Common myeloid progenitor, CD34-positive (primary cell): ENCODE measurements at regions of chr6 and their contacts with region 1.

Region 1: GRCh38 chr6:2791124-2791974 is 26.2 kb downstream of the WRNIP1 start:
- DNase-seq: peak; percentile 87 to 89 (median 89)
- H3K4me3 ChIP-seq: peak overlapping the region in 1 of 7 experiments; percentile 25
- H3K27ac ChIP-seq: peak overlapping the region in 1 of 2 experiments; percentile 66
- H3K4me1 ChIP-seq: peaks cover 18 to 63% (median 56%) of the 10 kb centered on the region in 4 experiments
- H3K27me3 ChIP-seq: no peaks in the 10 kb centered on the region

Region 2: DNA sequence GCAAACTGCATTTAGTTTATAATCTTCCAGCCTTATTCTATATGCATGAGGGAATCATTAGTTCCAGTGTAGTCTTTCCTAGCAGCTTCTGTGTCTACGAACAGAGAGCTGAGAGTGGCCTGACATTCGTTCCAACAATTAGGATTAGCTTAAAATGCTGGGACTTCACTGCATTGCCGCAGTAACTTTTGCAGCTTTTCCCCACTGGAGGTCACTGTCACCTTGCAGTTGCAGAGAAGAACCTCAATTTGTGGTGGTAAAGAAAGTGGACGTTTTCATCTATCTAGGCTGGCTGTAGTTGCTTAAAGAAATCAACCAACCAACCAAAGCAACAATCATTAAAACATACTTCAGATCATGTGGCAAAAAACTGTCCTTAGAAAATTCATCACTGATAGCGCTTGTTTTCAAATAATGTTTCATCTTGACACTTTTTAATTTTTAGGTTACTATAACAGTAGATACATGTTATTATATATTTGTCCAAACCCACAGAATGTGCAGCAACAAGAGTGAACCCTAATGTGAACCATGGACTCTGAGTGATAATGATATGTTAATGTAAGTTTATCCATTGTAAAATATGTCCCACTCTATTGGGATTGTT is 52.9 kb before region 1 on chr6:
- CTCF ChIA-PET with region 1: interaction called, 17 read pairs
- POLR2A ChIA-PET with region 1: no interaction called
- DNase-seq: peak; percentile 84 to 91 (median 88)
- H3K4me3 ChIP-seq: no peak overlapping the region
- H3K27ac ChIP-seq: no peak overlapping the region
- H3K4me1 ChIP-seq: peaks cover 9 to 38% (median 25%) of the 10 kb centered on the region in 4 experiments
- H3K27me3 ChIP-seq: no peaks in the 10 kb centered on the region

Region 3: GRCh38 chr6:2810092-2810671 is 18.8 kb after region 1 on chr6:
- CTCF ChIA-PET with region 1: interaction called, 13 read pairs
- POLR2A ChIA-PET with region 1: no interaction called
- DNase-seq: peak in 2 of 3 donors; percentile 36 to 49
- H3K4me3 ChIP-seq: no peak overlapping the region
- H3K27ac ChIP-seq: no peak overlapping the region
- H3K4me1 ChIP-seq: peaks cover 20 to 53% (median 44%) of the 10 kb centered on the region in 4 experiments
- H3K27me3 ChIP-seq: no peaks in the 10 kb centered on the region

Region 4: DNA sequence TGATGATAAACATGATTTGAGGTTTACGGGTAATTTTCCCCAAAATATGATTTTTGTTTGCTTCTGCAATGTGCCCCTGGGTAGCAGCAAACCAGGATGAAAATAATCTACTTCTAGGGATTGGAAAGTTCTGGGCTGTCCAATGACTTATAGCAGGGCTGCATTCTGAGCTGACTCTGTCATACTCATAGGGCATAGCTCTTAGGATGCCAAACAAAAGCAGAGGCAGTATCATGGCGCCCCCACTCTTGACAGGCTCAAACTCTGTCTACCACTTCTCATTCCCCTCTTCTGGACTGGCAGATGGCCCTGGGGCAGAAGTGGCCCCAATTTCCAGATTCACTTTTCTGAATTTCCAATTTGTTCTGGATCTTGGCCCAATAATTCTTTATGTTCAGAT is 40.0 kb after region 1 on chr6:
- CTCF ChIA-PET with region 1: interaction called, 15 read pairs
- POLR2A ChIA-PET with region 1: interaction called, 4 read pairs
- DNase-seq: no peak
- H3K4me3 ChIP-seq: no peak overlapping the region
- H3K27ac ChIP-seq: peak overlapping the region in 1 of 2 experiments; percentile 15
- H3K4me1 ChIP-seq: peaks cover 5 to 34% (median 11%) of the 10 kb centered on the region in 4 experiments
- H3K27me3 ChIP-seq: no peaks in the 10 kb centered on the region

Region 5: DNA sequence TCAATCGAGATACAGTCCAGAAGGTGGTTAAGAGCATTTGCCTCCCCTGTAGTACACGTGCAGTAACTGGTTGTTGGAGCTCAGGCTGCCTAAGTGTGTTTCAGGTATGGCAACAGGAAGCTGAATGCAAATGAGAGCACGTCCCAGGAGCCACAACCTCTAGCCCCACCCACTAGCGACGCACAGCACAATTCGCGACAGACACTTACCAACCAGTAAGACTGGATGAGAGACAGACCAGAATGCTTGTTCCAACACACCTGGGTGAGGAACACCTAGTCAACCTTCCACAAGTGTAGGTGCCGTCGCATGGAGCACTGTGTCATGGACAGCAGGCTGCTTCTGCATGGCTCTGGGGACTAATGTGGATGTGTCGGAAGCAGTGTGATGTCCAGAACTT is 57.5 kb after region 1 on chr6:
- CTCF ChIA-PET with region 1: interaction called, 53 read pairs
- POLR2A ChIA-PET with region 1: interaction called, 4 read pairs
- DNase-seq: no peak
- H3K4me3 ChIP-seq: no peak overlapping the region
- H3K27ac ChIP-seq: no peak overlapping the region
- H3K4me1 ChIP-seq: peaks cover 7 to 16% (median 8%) of the 10 kb centered on the region in 4 experiments
- H3K27me3 ChIP-seq: no peaks in the 10 kb centered on the region

Region 6: GRCh38 chr6:2917065-2917464 is 125.7 kb after region 1 on chr6:
- CTCF ChIA-PET with region 1: interaction called, 10 read pairs
- POLR2A ChIA-PET with region 1: no interaction called
- DNase-seq: no peak
- H3K4me3 ChIP-seq: no peak overlapping the region
- H3K27ac ChIP-seq: no peak overlapping the region
- H3K4me1 ChIP-seq: peaks cover 0 to 15% (median 8%) of the 10 kb centered on the region in 4 experiments
- H3K27me3 ChIP-seq: no peaks in the 10 kb centered on the region